Sciatic nerve (tissue), 2 donors: ENCODE measurements at regions of chr1 and their contacts with region 1.

Region 1: GRCh38 chr1:239418681-239419080 is 32.3 kb downstream of the CHRM3 start:
- DNase-seq: no peak
- ATAC-seq: no peak

Region 2: DNA sequence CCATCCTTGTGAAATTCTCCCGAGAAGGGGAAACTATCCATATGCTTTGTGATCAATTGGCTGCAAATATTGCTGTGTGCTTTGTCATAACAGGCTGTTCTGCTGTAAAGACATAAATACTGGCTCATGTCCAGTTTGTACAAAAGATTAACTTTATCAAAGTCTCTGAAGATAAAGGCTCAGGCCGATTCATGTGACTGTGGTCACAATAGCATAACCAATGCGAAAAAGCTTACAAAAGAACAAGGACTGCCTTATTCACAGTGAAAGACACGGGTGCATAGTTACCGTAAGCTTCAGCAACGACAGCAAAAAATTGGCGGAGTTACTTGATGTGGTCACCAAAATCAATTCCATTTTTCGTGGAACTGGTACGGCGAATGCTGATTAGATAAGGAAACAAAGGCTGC is 205.9 kb before region 1 on chr1:
- intact Hi-C with region 1: no loop called
- DNase-seq: no peak
- ATAC-seq: no peak

Region 3: GRCh38 chr1:239293350-239294110 is 125.2 kb before region 1 on chr1:
- intact Hi-C with region 1: no loop called
- DNase-seq: no peak
- ATAC-seq: no peak

Region 4: GRCh38 chr1:239386453-239387303 is 32.0 kb before region 1 on chr1 and contains the start of gene CHRM3:
- intact Hi-C with region 1: loop called (anchors 1 kb)
- DNase-seq: no peak
- ATAC-seq: peak; percentile 26
- total RNA-seq, gene CHRM3: 1.4 TPM

Region 5: DNA sequence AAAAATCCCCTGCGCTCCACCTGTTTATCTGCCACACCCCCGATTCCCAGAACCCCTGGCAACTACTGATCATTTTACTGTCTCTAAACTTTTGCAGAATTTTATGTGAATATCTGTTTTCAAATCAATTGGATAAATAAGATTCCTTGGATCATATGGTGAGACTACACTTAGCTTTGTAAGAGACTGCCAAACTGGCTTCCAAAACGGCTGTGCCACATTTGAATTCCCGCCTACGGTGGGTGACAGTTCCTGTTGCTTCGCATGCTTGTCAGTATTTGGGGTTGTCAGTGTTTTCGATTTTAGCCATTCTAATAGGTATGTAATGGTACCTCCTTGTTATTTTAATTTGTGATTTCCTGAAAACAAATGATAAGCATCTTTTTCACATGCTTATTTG is 650.3 kb after region 1 on chr1:
- intact Hi-C with region 1: no loop called
- DNase-seq: no peak
- ATAC-seq: no peak